Astrocyte of the spinal cord (primary cell): ENCODE measurements at regions of chr4 and their contacts with region 1.

Region 1: DNA sequence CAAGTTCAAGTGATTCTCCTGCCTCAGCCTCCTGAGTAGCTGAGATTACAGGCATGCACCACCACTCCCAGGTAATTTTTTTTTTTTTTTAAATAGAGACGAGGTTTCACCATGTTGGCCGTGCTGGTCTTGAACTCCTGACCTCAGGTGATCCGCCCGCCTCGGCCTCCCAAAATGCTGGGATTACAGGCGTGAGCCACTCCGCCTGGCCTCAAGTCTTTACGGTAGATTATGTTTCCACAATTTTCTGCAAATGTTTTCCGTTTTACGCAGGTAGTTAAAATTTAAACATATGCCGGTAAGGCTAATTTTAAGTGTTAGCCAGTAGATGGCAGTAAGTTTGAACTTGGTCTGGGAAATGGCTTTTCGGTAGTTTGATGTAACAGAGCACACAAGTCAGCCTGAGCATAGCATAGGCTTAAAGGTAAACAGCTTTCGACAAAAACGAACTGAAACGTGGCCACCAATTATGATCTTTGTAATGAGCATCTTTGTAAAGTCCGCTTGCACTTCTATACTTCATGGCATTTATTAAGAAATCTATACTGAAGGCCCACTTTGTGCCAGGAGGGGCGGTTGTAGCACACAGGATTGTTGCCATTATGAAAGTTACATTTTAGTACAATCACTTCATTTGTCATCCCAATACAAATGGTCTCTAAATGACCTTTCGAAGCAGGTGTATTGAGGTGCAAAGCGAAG is 31.1 kb downstream of the CCKAR start:
- DNase-seq: peak; percentile 72
- H3K4me3 ChIP-seq: no peak overlapping the region
- CTCF ChIP-seq: peak; percentile 66

Region 2: DNA sequence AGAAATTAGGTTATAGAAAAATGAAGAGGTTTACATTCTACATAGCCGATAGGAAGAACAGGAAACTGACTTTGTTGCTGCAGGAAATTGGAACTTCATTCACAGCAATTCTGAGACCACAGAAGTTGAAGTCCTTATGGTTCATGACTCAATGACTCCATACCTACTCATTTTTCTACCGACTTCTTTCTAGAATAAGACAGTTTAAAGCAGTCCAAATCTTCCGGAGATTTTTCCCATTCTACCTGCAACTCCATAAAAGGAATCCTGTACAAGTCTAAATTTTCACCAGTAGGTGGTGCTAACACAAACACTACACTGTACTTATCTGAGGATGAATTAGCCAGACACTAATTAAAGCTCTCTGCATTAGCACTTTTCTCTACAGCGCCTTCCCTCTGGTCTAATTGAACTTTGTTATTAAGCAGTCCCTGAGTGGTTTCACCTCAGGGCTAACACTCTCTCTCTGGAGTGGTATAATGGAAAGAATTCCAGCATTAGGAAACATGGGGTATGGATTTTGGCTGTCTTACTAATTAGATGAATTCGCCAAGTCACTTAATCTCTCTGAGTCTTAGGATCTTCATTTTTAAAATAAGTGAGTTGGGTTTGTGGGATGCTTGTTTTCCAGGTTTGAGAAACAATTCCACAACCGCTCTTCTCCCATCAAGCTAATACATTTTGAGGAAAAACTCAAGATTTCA is 377.3 kb before region 1 on chr4:
- in situ Hi-C with region 1: no loop called
- DNase-seq: peak; percentile 62
- H3K4me3 ChIP-seq: no peak overlapping the region
- CTCF ChIP-seq: peak; percentile 61

Region 3: DNA sequence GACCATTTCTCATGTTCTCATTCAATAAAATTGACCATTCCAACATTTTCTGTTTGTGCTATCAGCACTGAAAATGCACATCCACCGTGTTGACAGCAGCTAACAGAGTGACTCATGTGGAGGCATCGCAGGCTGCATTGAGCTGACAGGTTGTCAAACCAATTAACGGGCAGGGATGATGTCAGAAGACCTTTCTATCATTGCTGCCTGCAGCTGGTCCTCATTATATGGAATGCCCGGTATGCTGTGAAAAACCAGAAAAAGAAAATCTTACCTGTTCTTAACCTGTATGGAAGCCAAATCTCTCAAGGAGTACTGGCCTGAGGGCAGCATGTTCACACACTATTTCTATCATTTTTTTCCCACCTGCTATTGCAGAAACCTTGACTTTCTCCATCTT is 343.1 kb before region 1 on chr4:
- in situ Hi-C with region 1: no loop called
- DNase-seq: no peak
- H3K4me3 ChIP-seq: no peak overlapping the region
- CTCF ChIP-seq: no peak

Region 4: GRCh38 chr4:26557164-26557563 is 98.0 kb after region 1 on chr4:
- in situ Hi-C with region 1: no loop called
- DNase-seq: peak; percentile 97
- H3K4me3 ChIP-seq: no peak overlapping the region
- CTCF ChIP-seq: no peak

Region 5: GRCh38 chr4:26787461-26788340 is 328.5 kb after region 1 on chr4:
- in situ Hi-C with region 1: no loop called
- DNase-seq: peak; percentile 78
- H3K4me3 ChIP-seq: no peak overlapping the region
- CTCF ChIP-seq: peak; percentile 50

Region 6: DNA sequence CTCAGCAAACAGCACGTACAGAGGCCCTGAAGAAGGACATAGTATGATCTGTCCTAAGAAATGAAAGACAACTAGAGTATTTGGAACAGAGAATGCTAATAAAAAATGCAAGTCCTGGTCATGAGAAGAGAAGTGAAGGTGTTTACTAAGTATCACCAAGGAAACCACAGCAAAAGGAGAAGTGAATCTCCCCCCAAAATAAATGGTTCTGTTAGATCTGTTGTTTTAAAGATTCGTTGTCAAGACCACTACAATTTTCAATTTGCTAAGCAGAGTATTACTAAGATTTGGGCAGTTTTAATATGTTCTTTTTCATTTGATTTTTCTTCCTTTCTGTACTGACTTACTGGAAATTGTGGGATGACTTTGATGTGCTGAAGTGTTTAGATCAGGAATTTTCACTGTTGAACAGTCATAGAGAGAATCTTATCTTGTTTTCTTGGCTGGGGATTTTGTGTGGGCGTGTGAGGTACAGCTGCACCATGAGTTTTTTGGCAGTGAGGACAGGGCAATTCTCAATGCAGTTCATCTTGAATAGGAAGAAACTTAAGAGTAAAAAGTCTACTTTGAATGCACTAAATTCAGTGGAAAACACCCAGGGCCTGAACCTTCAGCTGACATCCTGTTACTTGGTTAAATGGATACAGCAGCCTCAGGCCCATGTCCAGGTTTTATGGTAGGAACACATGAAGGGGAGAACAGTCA is 533.6 kb after region 1 on chr4:
- in situ Hi-C with region 1: loop called (anchors 25 kb)
- DNase-seq: peak; percentile 71
- H3K4me3 ChIP-seq: no peak overlapping the region
- CTCF ChIP-seq: no peak